Caco-2 (cell line): ENCODE measurements at regions of chr5 and their contacts with region 1.

Region 1: GRCh38 chr5:57736716-57737115 is 254.1 kb upstream of the ACTBL2 start:
- DNase-seq: no peak
- H3K4me3 ChIP-seq: no peak overlapping the region
- H3K4me3 Mint-ChIP-seq: no peak overlapping the region
- H3K27ac Mint-ChIP-seq: peak overlapping the region; percentile 92
- H3K4me1 ChIP-seq: peaks cover 55% of the 10 kb centered on the region
- H3K4me1 Mint-ChIP-seq: peaks cover 34% of the 10 kb centered on the region
- H3K27me3 ChIP-seq: no peaks in the 10 kb centered on the region
- H3K27me3 Mint-ChIP-seq: no peaks in the 10 kb centered on the region
- CTCF ChIP-seq: no peak

Region 2: DNA sequence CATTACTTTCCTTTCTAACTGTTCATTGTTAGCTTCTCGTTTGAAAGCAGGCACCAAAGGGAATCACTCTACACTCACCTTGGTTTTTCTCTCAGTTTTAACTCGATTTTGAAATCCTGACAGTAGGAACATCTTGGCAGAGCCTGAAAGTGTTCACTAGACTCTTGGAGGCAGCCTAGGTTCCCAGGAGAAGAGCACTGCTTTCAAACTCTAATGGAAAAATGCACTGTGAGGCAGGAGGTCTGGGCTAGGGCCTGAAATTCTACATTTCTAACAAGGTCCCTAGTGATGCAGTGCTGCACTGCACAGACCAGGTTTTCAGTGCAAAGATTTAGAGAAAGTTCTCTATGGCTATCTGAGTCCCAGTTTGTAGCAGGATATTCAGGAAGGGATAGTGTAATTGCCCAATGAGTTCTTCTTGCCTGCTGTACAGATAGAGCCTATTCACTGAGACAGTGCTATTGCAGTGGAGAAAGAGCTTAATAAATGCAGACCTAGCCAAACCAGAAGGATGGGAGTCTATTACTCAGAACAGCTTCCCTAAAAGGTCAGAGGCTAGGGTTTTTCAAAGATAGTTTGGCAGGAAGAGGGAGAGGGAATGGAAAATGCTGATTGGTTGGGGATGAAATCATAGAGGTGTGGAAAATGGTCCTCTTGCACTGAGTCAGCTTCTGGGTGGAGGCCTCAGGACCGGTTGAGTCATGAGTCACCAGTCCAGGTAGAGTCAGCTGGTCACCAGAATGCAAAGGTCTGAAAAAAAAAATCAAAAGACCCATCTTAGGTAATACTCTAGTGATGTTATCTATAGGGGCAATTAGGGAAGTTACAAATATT is 408.9 kb before region 1 on chr5:
- CTCF ChIA-PET with region 1: no interaction called
- POLR2A ChIA-PET with region 1: interaction called, 12 read pairs
- intact Hi-C with region 1: no loop called
- DNase-seq: peak; percentile 76 to 79
- H3K4me3 ChIP-seq: no peak overlapping the region
- H3K4me3 Mint-ChIP-seq: no peak overlapping the region
- H3K27ac Mint-ChIP-seq: peak overlapping the region; percentile 4
- H3K4me1 ChIP-seq: peaks cover 19% of the 10 kb centered on the region
- H3K4me1 Mint-ChIP-seq: peaks cover 24% of the 10 kb centered on the region
- H3K27me3 ChIP-seq: no peaks in the 10 kb centered on the region
- H3K27me3 Mint-ChIP-seq: no peaks in the 10 kb centered on the region
- CTCF ChIP-seq: no peak

Region 3: GRCh38 chr5:57450991-57451876 is 285.5 kb before region 1 on chr5:
- CTCF ChIA-PET with region 1: no interaction called
- POLR2A ChIA-PET with region 1: no interaction called
- intact Hi-C with region 1: no loop called
- DNase-seq: no peak
- H3K4me3 ChIP-seq: no peak overlapping the region
- H3K4me3 Mint-ChIP-seq: no peak overlapping the region
- H3K27ac Mint-ChIP-seq: no peak overlapping the region
- H3K4me1 ChIP-seq: peaks cover 25% of the 10 kb centered on the region
- H3K4me1 Mint-ChIP-seq: peaks cover 19% of the 10 kb centered on the region
- H3K27me3 ChIP-seq: no peaks in the 10 kb centered on the region
- H3K27me3 Mint-ChIP-seq: no peaks in the 10 kb centered on the region
- CTCF ChIP-seq: no peak

Region 4: GRCh38 chr5:57718155-57718554 is 18.6 kb before region 1 on chr5:
- CTCF ChIA-PET with region 1: no interaction called
- POLR2A ChIA-PET with region 1: no interaction called
- intact Hi-C with region 1: loop called (anchors 1 kb)
- DNase-seq: no peak
- H3K4me3 ChIP-seq: no peak overlapping the region
- H3K4me3 Mint-ChIP-seq: no peak overlapping the region
- H3K27ac Mint-ChIP-seq: no peak overlapping the region
- H3K4me1 ChIP-seq: peaks cover 7% of the 10 kb centered on the region; the same call in 1 of the 2 replicates
- H3K4me1 Mint-ChIP-seq: no peaks in the 10 kb centered on the region
- H3K27me3 ChIP-seq: no peaks in the 10 kb centered on the region
- H3K27me3 Mint-ChIP-seq: no peaks in the 10 kb centered on the region
- CTCF ChIP-seq: no peak